Lower lobe of right lung (tissue), 2 donors: ENCODE measurements at regions of chr7 and their contacts with region 1.

Region 1: GRCh38 chr7:141792526-141792925 is 2.5 kb downstream of the TAS2R5 start:
- DNase-seq: no peak
- ATAC-seq: no peak
- H3K4me3 ChIP-seq: no peak overlapping the region
- H3K27ac ChIP-seq: no peak overlapping the region
- H3K4me1 ChIP-seq: no peaks in the 10 kb centered on the region
- H3K27me3 ChIP-seq: no peaks in the 10 kb centered on the region
- CTCF ChIP-seq: no peak

Region 2: DNA sequence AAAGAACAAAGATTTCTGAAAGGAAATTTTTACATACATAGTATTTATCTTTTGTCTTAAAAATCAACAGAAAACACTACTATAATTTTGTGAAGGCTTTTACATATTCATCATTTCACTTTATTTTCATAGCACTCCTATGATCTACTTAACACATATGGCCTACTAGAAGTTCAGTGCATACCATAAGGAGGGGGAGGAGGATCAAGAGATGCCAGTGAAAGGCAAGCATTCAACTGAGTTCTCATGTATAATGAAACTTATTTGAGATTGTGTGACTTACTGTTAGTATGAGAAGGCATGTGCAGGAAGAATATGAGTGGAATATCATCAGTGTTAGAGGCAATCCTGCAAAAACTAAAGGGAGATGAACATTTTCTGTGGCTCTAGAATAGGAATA is 878.4 kb before region 1 on chr7:
- intact Hi-C with region 1: no loop called
- DNase-seq: no peak
- ATAC-seq: no peak
- H3K4me3 ChIP-seq: no peak overlapping the region
- H3K27ac ChIP-seq: no peak overlapping the region
- H3K4me1 ChIP-seq: peaks cover 19% of the 10 kb centered on the region
- H3K27me3 ChIP-seq: no peaks in the 10 kb centered on the region
- CTCF ChIP-seq: no peak

Region 3: GRCh38 chr7:141847996-141848395 is 55.5 kb after region 1 on chr7:
- intact Hi-C with region 1: loop called (anchors 10 kb)
- DNase-seq: no peak
- ATAC-seq: no peak
- H3K4me3 ChIP-seq: no peak overlapping the region
- H3K27ac ChIP-seq: no peak overlapping the region
- H3K4me1 ChIP-seq: no peaks in the 10 kb centered on the region
- H3K27me3 ChIP-seq: no peaks in the 10 kb centered on the region
- CTCF ChIP-seq: no peak